ENCODE measurements at regions of chr1 and their contacts with region 1.

Region 1: GRCh38 chr1:167542109-167543032 is 11.2 kb downstream of the CREG1 start:
- DNase-seq: no peak
- CTCF ChIP-seq: no peak

Region 2: GRCh38 chr1:167220537-167221125 is 321.7 kb before region 1 on chr1 and contains the start of gene POU2F1:
- CTCF ChIA-PET with region 1: interaction called, 12 read pairs
- POLR2A ChIA-PET with region 1: no interaction called
- DNase-seq: peak; percentile 95
- CTCF ChIP-seq: peak; percentile 57

Region 3: DNA sequence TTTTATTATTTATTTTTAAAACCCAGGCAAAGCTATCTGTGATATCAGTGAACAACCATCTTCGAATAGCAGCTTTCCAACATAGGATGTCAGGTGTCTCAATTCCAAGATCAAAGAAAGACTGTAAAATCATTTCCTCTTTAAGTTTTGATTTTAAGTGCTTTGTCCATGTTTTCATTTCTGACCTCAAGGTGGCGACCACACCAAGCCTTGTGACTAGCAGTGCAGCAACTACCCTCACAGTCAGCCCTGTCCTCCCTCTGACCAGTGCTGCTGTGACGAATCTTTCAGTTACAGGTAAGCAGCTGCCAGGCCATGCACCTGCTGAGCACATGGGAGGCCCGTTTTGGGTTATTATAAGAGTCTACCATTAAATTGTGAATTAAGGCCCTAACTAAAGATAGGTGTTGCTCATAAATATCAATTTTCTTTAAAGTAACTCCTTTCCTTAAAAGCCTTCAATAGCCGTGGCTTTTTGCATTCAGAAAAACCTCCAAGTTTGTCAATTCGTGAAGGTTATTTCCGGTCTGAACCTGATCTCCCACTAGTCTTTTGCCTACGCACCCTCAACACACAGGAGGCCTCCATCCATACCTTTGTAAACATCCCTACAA is 141.0 kb before region 1 on chr1:
- CTCF ChIA-PET with region 1: interaction called, 10 read pairs
- POLR2A ChIA-PET with region 1: no interaction called
- DNase-seq: peak; percentile 46
- CTCF ChIP-seq: peak; percentile 53

Region 4: GRCh38 chr1:167454894-167455785 is 87.2 kb before region 1 on chr1:
- CTCF ChIA-PET with region 1: interaction called, 11 read pairs
- POLR2A ChIA-PET with region 1: no interaction called
- DNase-seq: peak; percentile 67
- CTCF ChIP-seq: no peak

Region 5: GRCh38 chr1:167524651-167525050 is 17.7 kb before region 1 on chr1:
- CTCF ChIA-PET with region 1: interaction called, 13 read pairs
- POLR2A ChIA-PET with region 1: no interaction called
- DNase-seq: no peak
- CTCF ChIP-seq: no peak

Region 6: DNA sequence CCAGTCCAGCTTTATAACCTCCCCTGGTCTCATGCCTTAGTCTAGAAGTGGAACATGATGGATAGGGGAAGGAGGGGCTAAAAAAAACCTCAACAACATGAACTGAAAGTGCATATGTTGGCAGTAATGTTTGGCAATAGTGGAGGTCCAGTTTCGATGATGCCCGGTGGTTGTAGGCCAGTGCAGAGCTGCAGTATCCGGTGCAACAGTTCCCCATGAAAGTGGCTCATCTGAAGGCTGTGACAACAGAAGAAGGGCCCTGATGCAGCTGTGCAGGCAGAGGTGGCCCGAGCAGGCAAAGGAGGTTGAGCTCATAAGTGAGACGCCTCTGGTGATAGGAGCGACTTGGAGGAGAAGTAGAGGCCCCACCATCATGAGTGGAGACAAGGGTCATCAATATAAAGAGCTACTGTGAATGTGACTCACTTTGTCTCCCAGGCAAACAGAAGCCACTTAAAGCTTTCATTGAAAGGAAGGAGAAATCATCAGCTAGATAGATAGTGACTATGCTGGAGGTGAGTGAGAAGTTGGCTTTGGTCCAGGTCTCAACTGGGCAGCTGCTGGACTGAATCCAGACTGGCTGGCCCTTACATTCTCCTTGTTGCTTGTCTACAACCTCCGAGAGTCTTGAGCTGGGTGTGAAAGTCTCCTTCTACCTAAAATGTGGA is 21.3 kb after region 1 on chr1:
- CTCF ChIA-PET with region 1: interaction called, 20 read pairs
- POLR2A ChIA-PET with region 1: no interaction called
- DNase-seq: no peak
- CTCF ChIP-seq: no peak

Region 7: GRCh38 chr1:167623951-167624350 is 81.6 kb after region 1 on chr1:
- CTCF ChIA-PET with region 1: no interaction called
- POLR2A ChIA-PET with region 1: no interaction called
- DNase-seq: no peak
- CTCF ChIP-seq: no peak